ENCODE measurements at regions of chr6 and their contacts with region 1.

Region 1: DNA sequence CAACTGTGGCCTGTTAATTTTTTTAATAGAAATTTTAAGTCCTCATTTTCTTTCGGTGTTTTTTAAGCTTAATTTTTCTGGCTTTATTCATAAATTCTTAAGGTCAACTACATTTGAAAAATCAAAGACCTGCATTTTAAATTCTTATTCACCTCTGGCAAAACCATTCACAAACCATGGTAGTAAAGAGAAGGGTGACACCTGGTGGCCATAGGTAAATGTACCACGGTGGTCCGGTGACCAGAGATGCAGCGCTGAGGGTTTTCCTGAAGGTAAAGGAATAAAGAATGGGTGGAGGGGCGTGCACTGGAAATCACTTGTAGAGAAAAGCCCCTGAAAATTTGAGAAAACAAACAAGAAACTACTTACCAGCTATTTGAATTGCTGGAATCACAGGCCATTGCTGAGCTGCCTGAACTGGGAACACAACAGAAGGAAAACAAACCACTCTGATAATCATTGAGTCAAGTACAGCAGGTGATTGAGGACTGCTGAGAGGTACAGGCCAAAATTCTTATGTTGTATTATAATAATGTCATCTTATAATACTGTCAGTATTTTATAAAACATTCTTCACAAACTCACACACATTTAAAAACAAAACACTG is 10.1 kb downstream of the HFE start:
- DNase-seq: peak; percentile 74
- H3K4me3 Mint-ChIP-seq: no peak overlapping the region
- H3K27ac Mint-ChIP-seq: no peak overlapping the region
- H3K4me1 Mint-ChIP-seq: no peaks in the 10 kb centered on the region
- H3K27me3 Mint-ChIP-seq: no peaks in the 10 kb centered on the region
- CTCF ChIP-seq: peak; percentile 75

Region 2: GRCh38 chr6:25927756-25928216 is 169.6 kb before region 1 on chr6:
- CTCF ChIA-PET with region 1: no interaction called
- POLR2A ChIA-PET with region 1: no interaction called
- intact Hi-C with region 1: no loop called
- DNase-seq: no peak
- H3K4me3 Mint-ChIP-seq: no peak overlapping the region
- H3K27ac Mint-ChIP-seq: no peak overlapping the region
- H3K4me1 Mint-ChIP-seq: no peaks in the 10 kb centered on the region
- H3K27me3 Mint-ChIP-seq: no peaks in the 10 kb centered on the region
- CTCF ChIP-seq: no peak

Region 3: GRCh38 chr6:26065952-26066380 is 31.4 kb before region 1 on chr6:
- CTCF ChIA-PET with region 1: interaction called, 425 read pairs
- POLR2A ChIA-PET with region 1: interaction called, 235 read pairs
- intact Hi-C with region 1: loop called (anchors 1 kb)
- DNase-seq: peak; percentile 87
- H3K4me3 Mint-ChIP-seq: no peak overlapping the region
- H3K27ac Mint-ChIP-seq: peak overlapping the region; percentile 23
- H3K4me1 Mint-ChIP-seq: no peaks in the 10 kb centered on the region
- H3K27me3 Mint-ChIP-seq: no peaks in the 10 kb centered on the region
- CTCF ChIP-seq: peak; percentile 81

Measured in MCF 10A (cell line).